Prostate gland (tissue), 2 donors: ENCODE measurements at regions of chr7 and their contacts with region 1.

Region 1: GRCh38 chr7:14717816-14718215 is 184.7 kb downstream of the DGKB start:
- DNase-seq: no peak
- H3K4me3 ChIP-seq: no peak overlapping the region
- H3K27ac ChIP-seq: no peak overlapping the region
- H3K4me1 ChIP-seq: no peaks in the 10 kb centered on the region
- H3K27me3 ChIP-seq: no peaks in the 10 kb centered on the region
- CTCF ChIP-seq: peak in 3 of 4 experiments; percentile 54 to 66 (median 60)
- POLR2A ChIP-seq: no peak

Region 2: GRCh38 chr7:14579971-14580370 is 137.8 kb before region 1 on chr7:
- intact Hi-C with region 1: no loop called
- DNase-seq: no peak
- H3K4me3 ChIP-seq: no peak overlapping the region
- H3K27ac ChIP-seq: no peak overlapping the region
- H3K4me1 ChIP-seq: no peaks in the 10 kb centered on the region
- H3K27me3 ChIP-seq: no peaks in the 10 kb centered on the region
- CTCF ChIP-seq: no peak
- POLR2A ChIP-seq: no peak

Region 3: DNA sequence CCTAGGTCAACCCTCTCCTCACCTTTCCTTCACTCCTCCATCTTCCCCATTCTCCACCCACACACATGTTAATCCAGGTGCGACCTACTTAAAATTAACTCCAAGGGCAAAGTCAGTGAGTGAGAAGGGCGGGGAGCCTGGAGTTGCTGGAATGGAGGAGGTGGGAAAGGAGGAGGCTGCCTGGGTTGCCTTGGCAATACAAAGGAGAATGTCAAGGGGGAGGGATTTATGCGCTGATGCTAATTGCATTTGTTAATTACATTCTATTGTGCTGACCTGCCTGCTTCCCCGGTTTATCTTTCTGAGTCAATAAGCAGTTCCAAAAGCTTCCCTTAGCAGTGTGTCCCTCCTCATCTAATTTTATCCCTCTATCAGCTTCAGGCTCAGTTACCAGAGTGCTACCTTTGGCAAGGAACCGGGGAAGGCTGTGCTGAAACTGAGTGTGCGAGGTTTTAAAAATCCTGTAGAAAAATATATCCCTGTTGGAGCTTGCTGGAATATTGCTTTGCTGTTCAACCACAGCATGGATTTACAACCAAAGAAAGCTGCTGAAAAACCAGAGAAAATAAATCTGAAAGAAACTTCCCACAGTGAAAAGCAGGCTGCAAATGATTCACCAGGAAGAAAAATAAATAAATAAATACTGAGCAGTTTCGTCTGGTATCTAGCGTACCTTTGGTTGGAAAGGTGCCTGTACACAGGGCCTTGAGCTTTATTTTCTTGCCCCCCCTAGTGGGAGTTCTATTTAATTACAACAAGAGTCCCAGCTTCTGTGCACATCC is 297.9 kb after region 1 on chr7:
- intact Hi-C with region 1: loop called (anchors 2 kb)
- DNase-seq: peak; percentile 59
- H3K4me3 ChIP-seq: no peak overlapping the region
- H3K27ac ChIP-seq: no peak overlapping the region
- H3K4me1 ChIP-seq: no peaks in the 10 kb centered on the region
- H3K27me3 ChIP-seq: no peaks in the 10 kb centered on the region
- CTCF ChIP-seq: peak; percentile 36 to 86 (median 70)
- POLR2A ChIP-seq: no peak